AG04449 (cell line): ENCODE measurements at regions of chr7 and their contacts with region 1.

Region 1: DNA sequence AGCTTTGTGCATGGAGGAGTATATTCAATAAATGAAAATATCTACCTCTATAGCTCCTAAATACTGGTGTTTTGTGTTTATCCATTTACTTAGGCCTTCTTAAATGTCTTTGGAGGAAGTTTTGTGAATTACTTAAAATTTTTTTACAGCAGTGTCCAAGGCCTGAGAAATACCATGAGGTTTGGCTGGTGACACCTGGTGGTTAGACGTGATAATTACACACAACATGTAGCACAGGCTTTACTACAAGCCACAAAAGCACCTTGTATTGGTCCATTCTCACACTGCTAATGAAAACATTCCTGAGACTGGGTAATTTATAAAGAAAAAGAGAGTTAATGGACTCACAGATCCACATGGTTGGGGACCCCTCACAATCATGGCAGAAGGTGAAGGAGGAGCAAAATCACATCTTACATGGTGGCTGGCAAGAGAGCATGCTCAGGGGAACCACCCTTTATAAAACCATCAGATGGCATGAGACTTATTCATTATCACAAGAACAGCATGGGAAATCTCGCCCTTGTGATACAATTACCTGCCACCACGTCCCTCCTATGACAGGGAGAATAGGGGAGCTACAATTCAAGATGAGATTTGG is 20.6 kb downstream of the HYAL4 start:
- DNase-seq: no peak
- H3K4me3 ChIP-seq: no peak overlapping the region
- CTCF ChIP-seq: peak; percentile 60

Region 2: GRCh38 chr7:123131140-123131539 is 734.5 kb before region 1 on chr7:
- CTCF ChIA-PET with region 1: no interaction called
- POLR2A ChIA-PET with region 1: no interaction called
- DNase-seq: no peak
- H3K4me3 ChIP-seq: no peak overlapping the region
- CTCF ChIP-seq: no peak

Region 3: GRCh38 chr7:123580406-123581161 is 285.0 kb before region 1 on chr7:
- CTCF ChIA-PET with region 1: interaction called, 12 read pairs
- POLR2A ChIA-PET with region 1: no interaction called
- DNase-seq: peak; percentile 5
- H3K4me3 ChIP-seq: no peak overlapping the region
- CTCF ChIP-seq: peak; percentile 67

Region 4: DNA sequence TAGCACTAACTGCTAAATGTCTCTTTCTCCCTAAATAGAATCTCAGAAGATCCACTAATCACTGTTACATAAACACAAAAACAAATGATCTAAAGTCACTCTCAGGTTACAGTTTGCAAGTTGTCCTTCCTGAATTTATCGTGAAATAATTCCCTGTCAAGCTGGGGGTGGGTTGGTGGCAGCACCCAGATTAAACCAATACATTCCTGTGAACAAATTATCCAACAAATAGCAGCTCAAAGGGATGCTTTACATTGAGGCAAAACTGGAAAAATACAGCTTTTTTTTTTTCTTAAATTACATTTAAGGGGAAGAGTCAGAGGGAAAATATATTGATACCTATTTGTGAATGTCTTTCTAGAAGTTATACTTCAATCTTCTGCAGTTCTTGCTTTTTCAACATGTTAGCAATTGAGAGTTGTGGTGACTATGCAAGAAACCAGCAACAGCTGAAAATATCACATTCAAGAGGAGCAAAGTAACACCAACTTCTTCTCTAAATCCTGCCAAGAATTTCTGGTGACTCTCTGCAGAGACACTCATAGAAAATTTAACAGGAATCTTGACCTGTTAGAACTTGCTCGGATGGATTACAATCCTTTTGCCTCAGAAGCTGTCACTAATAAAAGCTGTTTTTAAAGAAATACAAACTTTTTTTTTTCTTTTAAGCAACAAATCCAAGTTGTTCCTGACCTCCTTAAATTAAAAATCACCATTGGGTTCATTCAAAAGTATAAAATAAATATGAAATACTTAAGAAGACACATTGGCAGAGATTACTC is 191.0 kb before region 1 on chr7:
- CTCF ChIA-PET with region 1: interaction called, 58 read pairs
- POLR2A ChIA-PET with region 1: no interaction called
- DNase-seq: peak; percentile 9
- H3K4me3 ChIP-seq: no peak overlapping the region
- CTCF ChIP-seq: no peak

Region 5: GRCh38 chr7:123692471-123692877 is 173.1 kb before region 1 on chr7:
- CTCF ChIA-PET with region 1: interaction called, 10 read pairs
- POLR2A ChIA-PET with region 1: no interaction called
- DNase-seq: no peak
- H3K4me3 ChIP-seq: no peak overlapping the region
- CTCF ChIP-seq: no peak

Region 6: DNA sequence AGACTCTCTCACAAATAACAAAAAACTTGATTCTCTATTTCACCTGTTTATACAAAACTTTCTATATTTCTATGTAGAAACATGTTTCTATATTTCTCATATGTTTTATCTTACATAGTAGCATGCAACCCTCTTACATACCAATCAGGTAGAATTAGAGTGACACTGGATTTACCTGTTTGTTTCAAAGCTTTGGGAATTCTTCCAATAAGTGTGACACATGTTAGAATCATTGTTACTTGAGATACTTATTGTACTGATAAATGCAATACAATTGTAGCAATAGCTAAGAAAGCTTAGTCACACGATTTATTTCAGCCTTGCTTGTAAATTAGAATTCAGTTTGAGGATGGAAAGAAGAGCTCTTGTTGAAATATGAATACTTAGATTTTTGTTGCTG is 15.8 kb before region 1 on chr7:
- CTCF ChIA-PET with region 1: interaction called, 15 read pairs
- POLR2A ChIA-PET with region 1: no interaction called
- DNase-seq: no peak
- H3K4me3 ChIP-seq: no peak overlapping the region
- CTCF ChIP-seq: no peak